ENCODE measurements at regions of chr17 and their contacts with region 1.

Region 1: GRCh38 chr17:19538095-19539039 is 4.7 kb downstream of the SLC47A1 start:
- DNase-seq: no peak
- H3K4me3 ChIP-seq: no peak overlapping the region
- CTCF ChIP-seq: no peak
- POLR2A ChIP-seq: no peak

Region 2: GRCh38 chr17:19579867-19580565 is 41.6 kb after region 1 on chr17:
- intact Hi-C with region 1: loop called (anchors 1 kb)
- DNase-seq: no peak
- H3K4me3 ChIP-seq: peak overlapping the region; percentile 1
- CTCF ChIP-seq: no peak
- POLR2A ChIP-seq: no peak

Measured in lower leg skin (tissue), 4 donors.